Activated CD4-positive, alpha-beta T cell treated with anti-CD3 and anti-CD28 coated beads for 36 hours (primary cell): ENCODE measurements at regions of chr1 and their contacts with region 1.

Region 1: GRCh38 chr1:178501705-178502329 is 5.1 kb upstream of the CLEC20A start:
- DNase-seq: peak; percentile 80
- ATAC-seq: peak; percentile 75
- H3K4me3 Mint-ChIP-seq: no peak overlapping the region
- H3K27ac Mint-ChIP-seq: no peak overlapping the region
- H3K4me1 Mint-ChIP-seq: no peaks in the 10 kb centered on the region
- H3K27me3 Mint-ChIP-seq: peaks cover 2% of the 10 kb centered on the region

Region 2: DNA sequence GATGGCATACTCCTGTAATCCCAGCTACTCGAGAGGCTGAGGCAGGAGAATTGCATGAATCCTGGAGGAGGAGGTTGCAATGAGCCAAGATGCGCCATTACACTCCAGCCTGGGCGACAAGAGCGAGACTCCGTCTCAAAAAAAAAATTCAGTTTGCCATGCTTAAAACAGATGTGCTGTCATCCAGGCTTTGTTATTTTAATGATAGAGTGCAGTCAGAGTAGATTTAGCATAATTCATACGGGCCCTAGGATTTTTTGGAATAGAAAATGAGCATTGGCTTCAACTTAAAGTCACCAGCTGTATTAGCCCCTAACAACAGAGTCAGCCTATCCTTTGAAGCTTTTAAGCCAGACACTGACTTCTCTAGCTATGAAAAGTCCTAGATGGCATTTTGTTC is 283.3 kb before region 1 on chr1:
- CTCF ChIA-PET with region 1: no interaction called
- POLR2A ChIA-PET with region 1: no interaction called
- intact Hi-C with region 1: no loop called
- DNase-seq: no peak
- ATAC-seq: no peak
- H3K4me3 Mint-ChIP-seq: no peak overlapping the region
- H3K27ac Mint-ChIP-seq: no peak overlapping the region
- H3K4me1 Mint-ChIP-seq: no peaks in the 10 kb centered on the region
- H3K27me3 Mint-ChIP-seq: no peaks in the 10 kb centered on the region

Region 3: DNA sequence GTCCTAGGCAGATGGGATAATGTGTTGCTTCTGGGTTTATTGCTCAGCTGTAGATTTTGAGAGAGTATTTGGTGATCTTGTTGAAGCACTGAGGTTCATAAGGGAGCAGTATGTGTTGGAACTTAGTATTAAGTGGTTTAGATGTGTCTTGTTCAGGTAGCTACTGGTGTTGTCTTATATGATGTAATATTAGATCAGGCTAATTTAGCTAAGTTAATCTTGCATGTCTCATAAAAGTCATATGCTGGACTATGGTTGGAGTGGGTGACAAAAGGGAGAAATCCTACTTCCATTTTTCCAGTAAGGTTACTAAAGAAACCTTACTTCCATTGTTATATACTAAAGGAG is 201.5 kb before region 1 on chr1:
- CTCF ChIA-PET with region 1: interaction called, 11 read pairs
- POLR2A ChIA-PET with region 1: interaction called, 3 read pairs
- intact Hi-C with region 1: no loop called
- DNase-seq: no peak
- ATAC-seq: no peak
- H3K4me3 Mint-ChIP-seq: no peak overlapping the region
- H3K27ac Mint-ChIP-seq: no peak overlapping the region
- H3K4me1 Mint-ChIP-seq: no peaks in the 10 kb centered on the region
- H3K27me3 Mint-ChIP-seq: peaks cover 6% of the 10 kb centered on the region

Region 4: DNA sequence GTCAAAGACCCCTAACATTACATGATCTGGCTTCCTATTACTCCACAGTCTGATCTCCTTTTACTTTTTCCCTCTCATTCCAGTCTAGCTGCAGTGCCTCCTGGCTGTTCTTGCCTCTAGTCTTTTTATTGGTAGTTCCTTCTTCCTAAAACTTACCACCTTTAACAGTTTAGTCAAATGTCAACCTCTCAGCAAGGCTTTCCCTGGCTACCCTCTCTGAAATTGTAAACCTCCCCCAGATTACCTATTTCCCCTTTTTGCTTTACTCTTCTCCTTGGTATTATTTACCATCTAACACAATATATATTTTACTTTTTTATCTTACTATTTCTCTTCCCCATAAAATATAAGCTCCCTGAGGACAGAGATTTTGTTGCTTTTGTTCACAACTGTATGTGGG is 134.7 kb before region 1 on chr1:
- CTCF ChIA-PET with region 1: no interaction called
- POLR2A ChIA-PET with region 1: no interaction called
- intact Hi-C with region 1: loop called in 1 of 2 experiments (anchors 5 kb)
- DNase-seq: no peak
- ATAC-seq: no peak
- H3K4me3 Mint-ChIP-seq: no peak overlapping the region
- H3K27ac Mint-ChIP-seq: no peak overlapping the region
- H3K4me1 Mint-ChIP-seq: no peaks in the 10 kb centered on the region
- H3K27me3 Mint-ChIP-seq: peaks cover 4% of the 10 kb centered on the region

Region 5: DNA sequence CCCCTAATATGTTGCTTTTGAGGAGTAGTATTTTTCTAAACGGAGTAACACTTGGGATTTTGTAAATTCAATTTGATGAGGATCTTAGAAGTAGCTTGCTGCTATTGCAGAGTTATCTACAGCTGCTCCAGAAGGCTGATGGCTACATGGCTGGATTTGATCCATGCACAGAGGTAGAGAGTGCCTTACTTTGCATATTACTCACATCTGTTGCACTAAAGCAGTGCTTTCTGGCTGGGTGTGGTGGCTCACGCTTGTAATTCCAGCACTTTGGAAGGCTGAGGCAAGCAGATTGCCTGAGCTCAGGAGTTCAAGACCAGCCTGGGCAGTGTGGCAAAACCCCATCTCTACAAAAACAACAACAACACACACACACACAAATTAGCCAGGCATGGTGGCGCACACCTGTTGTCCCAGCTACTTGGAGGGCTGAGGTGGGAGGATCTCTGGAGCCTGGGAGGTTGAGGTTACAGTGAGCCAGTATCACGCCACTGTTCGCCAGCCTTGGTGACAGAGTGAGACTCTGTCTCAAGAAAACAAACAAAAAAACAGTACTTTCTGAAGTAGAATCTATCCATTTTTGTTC is 247.9 kb after region 1 on chr1:
- CTCF ChIA-PET with region 1: no interaction called
- POLR2A ChIA-PET with region 1: no interaction called
- intact Hi-C with region 1: no loop called
- DNase-seq: no peak
- ATAC-seq: no peak
- H3K4me3 Mint-ChIP-seq: no peak overlapping the region
- H3K27ac Mint-ChIP-seq: no peak overlapping the region
- H3K4me1 Mint-ChIP-seq: peaks cover 3% of the 10 kb centered on the region
- H3K27me3 Mint-ChIP-seq: no peaks in the 10 kb centered on the region